IMR-90 (cell line): ENCODE measurements at regions of chr17 and their contacts with region 1.

Region 1: GRCh38 chr17:45371414-45372327 is 54.9 kb upstream of the MAP3K14 start:
- DNase-seq: peak; percentile 96
- ATAC-seq: peak; percentile 90
- H3K4me3 ChIP-seq: peak overlapping the region; percentile 10; the same call in 1 of the 2 replicates
- H3K27ac ChIP-seq: peak overlapping the region; percentile 100
- H3K4me1 ChIP-seq: peaks cover 34% of the 10 kb centered on the region
- H3K27me3 ChIP-seq: no peaks in the 10 kb centered on the region
- CTCF ChIP-seq: no peak
- POLR2A ChIP-seq: peak; percentile 59
- RAD21 ChIP-seq: peak; percentile 35; the same call in 1 of the 2 replicates

Region 2: DNA sequence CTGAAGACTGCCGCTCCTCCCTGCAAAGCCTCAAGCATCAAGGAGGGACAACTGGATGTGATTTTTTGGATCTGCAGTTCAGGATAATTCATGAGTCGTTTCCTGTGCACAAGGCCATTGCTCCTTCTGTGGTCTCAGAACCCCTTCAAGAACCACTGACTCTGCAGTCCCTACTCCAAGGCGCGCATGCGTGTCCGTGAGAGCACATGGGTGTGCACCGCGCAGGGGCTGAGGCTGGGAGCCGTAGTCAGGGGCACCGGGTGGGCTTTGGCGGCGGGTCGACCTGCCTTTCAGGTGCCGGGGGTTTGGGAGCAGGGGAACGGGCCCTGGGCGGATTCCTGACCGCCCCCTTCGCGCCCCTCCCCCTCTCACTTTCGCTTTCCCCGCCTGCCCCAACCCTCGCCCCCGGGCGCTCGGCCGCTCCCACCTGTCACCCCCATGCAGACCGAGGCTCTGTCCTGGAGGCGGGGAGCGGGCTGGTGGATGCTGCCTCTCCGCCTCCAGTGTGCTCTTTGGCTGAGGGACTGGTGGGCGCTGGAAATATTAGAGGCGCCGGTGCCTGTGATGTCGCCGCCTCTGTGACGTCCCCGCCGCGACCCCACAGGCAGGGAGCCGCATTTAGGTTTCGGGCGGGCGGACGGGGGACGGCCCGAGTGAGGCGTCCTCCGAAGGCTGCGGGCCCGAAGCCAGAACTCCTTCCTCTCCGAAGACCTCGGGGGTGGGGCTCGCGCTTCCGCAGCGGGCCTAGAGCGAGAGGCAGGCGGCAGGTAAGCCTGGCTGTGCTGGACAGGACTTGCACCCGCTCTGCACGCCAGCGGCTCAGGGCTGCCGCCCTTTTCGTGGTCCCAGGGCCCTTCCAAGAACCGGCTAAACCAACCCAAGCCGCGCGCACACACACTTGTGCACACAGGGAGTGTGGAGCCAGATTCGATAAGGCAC is 109.8 kb before region 1 on chr17 and contains the start of gene SPATA32:
- CTCF ChIA-PET with region 1: no interaction called
- POLR2A ChIA-PET with region 1: no interaction called
- dilution Hi-C with region 1: no loop called
- in situ Hi-C with region 1: no loop called
- intact Hi-C with region 1: no loop called
- DNase-seq: peak; percentile 29
- ATAC-seq: peak; percentile 9
- H3K4me3 ChIP-seq: peak within 1 kb of the TSS; percentile 51
- H3K27ac ChIP-seq: no peak within 1 kb of the TSS; the same call in 1 of the 2 replicates
- H3K4me1 ChIP-seq: peaks cover 27% of the 10 kb centered on the region
- H3K27me3 ChIP-seq: no peaks in the 10 kb centered on the region
- CTCF ChIP-seq: no peak
- POLR2A ChIP-seq: no peak
- RAD21 ChIP-seq: no peak
- total RNA-seq, gene SPATA32: under 0.01 and 0.18 TPM in 2 replicates

Region 3: GRCh38 chr17:45284176-45285140 is 87.2 kb before region 1 on chr17:
- CTCF ChIA-PET with region 1: no interaction called
- POLR2A ChIA-PET with region 1: no interaction called
- dilution Hi-C with region 1: no loop called
- in situ Hi-C with region 1: no loop called
- intact Hi-C with region 1: no loop called
- DNase-seq: no peak
- ATAC-seq: no peak
- H3K4me3 ChIP-seq: no peak overlapping the region
- H3K27ac ChIP-seq: no peak overlapping the region
- H3K4me1 ChIP-seq: peaks cover 18% of the 10 kb centered on the region
- H3K27me3 ChIP-seq: no peaks in the 10 kb centered on the region
- CTCF ChIP-seq: peak; percentile 15; the same call in 1 of the 2 replicates
- POLR2A ChIP-seq: no peak
- RAD21 ChIP-seq: peak; percentile 12; the same call in 1 of the 2 replicates

Region 4: GRCh38 chr17:45311760-45312476 is 59.8 kb before region 1 on chr17:
- CTCF ChIA-PET with region 1: interaction called, 6 read pairs
- POLR2A ChIA-PET with region 1: interaction called, 3 read pairs
- dilution Hi-C with region 1: no loop called
- in situ Hi-C with region 1: loop called (anchors 5 kb)
- intact Hi-C with region 1: loop called (anchors 2 kb)
- DNase-seq: peak; percentile 63
- ATAC-seq: no peak
- H3K4me3 ChIP-seq: no peak overlapping the region
- H3K27ac ChIP-seq: peak overlapping the region; percentile 31
- H3K4me1 ChIP-seq: peaks cover 46% of the 10 kb centered on the region
- H3K27me3 ChIP-seq: no peaks in the 10 kb centered on the region
- CTCF ChIP-seq: no peak
- POLR2A ChIP-seq: no peak
- RAD21 ChIP-seq: no peak

Region 5: GRCh38 chr17:45317112-45317928 is 54.4 kb before region 1 on chr17:
- CTCF ChIA-PET with region 1: interaction called, 6 read pairs
- POLR2A ChIA-PET with region 1: no interaction called
- dilution Hi-C with region 1: no loop called
- in situ Hi-C with region 1: loop called (anchors 5 kb)
- intact Hi-C with region 1: loop called (anchors 2 kb)
- DNase-seq: peak; percentile 100
- ATAC-seq: peak; percentile 85
- H3K4me3 ChIP-seq: peak overlapping the region; percentile 42
- H3K27ac ChIP-seq: peak overlapping the region; percentile 62
- H3K4me1 ChIP-seq: peaks cover 47% of the 10 kb centered on the region
- H3K27me3 ChIP-seq: no peaks in the 10 kb centered on the region
- CTCF ChIP-seq: no peak
- POLR2A ChIP-seq: no peak
- RAD21 ChIP-seq: 0 out of 2 replicates have a peak, but pooled peaks have one; percentile 14

Region 6: DNA sequence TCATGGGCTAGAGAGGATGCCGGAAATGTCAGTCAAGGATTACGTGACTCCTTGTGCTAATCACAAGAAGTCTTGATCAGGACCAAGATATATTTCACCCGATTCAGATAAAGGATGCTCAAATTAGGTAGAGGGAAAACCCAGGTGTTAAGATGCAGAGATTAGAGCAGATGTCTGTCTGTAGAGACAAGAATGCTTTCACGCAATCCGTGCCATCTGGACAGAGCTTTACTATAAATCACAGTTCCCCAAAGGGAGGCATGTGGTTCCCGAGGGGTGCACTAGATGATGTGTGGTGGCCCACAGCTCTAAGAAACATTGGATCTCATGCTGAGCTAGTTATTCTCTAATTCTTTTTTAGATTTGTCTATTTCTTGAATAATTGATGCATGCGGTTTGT is 45.1 kb before region 1 on chr17:
- CTCF ChIA-PET with region 1: no interaction called
- POLR2A ChIA-PET with region 1: interaction called, 10 read pairs
- dilution Hi-C with region 1: no loop called
- in situ Hi-C with region 1: no loop called
- intact Hi-C with region 1: no loop called
- DNase-seq: no peak
- ATAC-seq: no peak
- H3K4me3 ChIP-seq: no peak overlapping the region
- H3K27ac ChIP-seq: no peak overlapping the region
- H3K4me1 ChIP-seq: peaks cover 9% of the 10 kb centered on the region
- H3K27me3 ChIP-seq: no peaks in the 10 kb centered on the region
- CTCF ChIP-seq: no peak
- POLR2A ChIP-seq: no peak
- RAD21 ChIP-seq: no peak

Region 7: GRCh38 chr17:45967378-45967777 is 595.7 kb after region 1 on chr17:
- CTCF ChIA-PET with region 1: interaction called, 10 read pairs
- POLR2A ChIA-PET with region 1: no interaction called
- dilution Hi-C with region 1: no loop called
- in situ Hi-C with region 1: no loop called
- intact Hi-C with region 1: no loop called
- DNase-seq: no peak
- ATAC-seq: no peak
- H3K4me3 ChIP-seq: no peak overlapping the region
- H3K27ac ChIP-seq: no peak overlapping the region
- H3K4me1 ChIP-seq: no peaks in the 10 kb centered on the region
- H3K27me3 ChIP-seq: peaks cover 38% of the 10 kb centered on the region
- CTCF ChIP-seq: no peak
- POLR2A ChIP-seq: no peak
- RAD21 ChIP-seq: no peak